Sigmoid colon (tissue), 7 donors: ENCODE measurements at regions of chr19 and their contacts with region 1.

Region 1: GRCh38 chr19:50383852-50384684 is at the start of gene POLD1:
- DNase-seq: peak; percentile 98
- H3K4me3 ChIP-seq: peak within 1 kb of the TSS; percentile 58 to 77 (median 73)
- H3K27ac ChIP-seq: peak within 1 kb of the TSS; percentile 84 to 92 (median 88)
- H3K4me1 ChIP-seq: peaks cover 0 to 21% (median 16%) of the 10 kb centered on the region in 4 donors
- H3K27me3 ChIP-seq: no peaks in the 10 kb centered on the region
- CTCF ChIP-seq: no peak
- EP300 ChIP-seq: no peak
- POLR2A ChIP-seq: no peak
- total RNA-seq, gene POLD1: 9.6 to 20.5 (median 10.0) TPM

Region 2: GRCh38 chr19:50300814-50301606 is 83.1 kb before region 1 on chr19:
- intact Hi-C with region 1: no loop called
- DNase-seq: no peak
- H3K4me3 ChIP-seq: no peak overlapping the region
- H3K27ac ChIP-seq: no peak overlapping the region
- H3K4me1 ChIP-seq: no peaks in the 10 kb centered on the region
- H3K27me3 ChIP-seq: peaks cover 0 to 6% (median 0%) of the 10 kb centered on the region in 3 donors
- CTCF ChIP-seq: no peak
- EP300 ChIP-seq: no peak
- POLR2A ChIP-seq: no peak

Region 3: DNA sequence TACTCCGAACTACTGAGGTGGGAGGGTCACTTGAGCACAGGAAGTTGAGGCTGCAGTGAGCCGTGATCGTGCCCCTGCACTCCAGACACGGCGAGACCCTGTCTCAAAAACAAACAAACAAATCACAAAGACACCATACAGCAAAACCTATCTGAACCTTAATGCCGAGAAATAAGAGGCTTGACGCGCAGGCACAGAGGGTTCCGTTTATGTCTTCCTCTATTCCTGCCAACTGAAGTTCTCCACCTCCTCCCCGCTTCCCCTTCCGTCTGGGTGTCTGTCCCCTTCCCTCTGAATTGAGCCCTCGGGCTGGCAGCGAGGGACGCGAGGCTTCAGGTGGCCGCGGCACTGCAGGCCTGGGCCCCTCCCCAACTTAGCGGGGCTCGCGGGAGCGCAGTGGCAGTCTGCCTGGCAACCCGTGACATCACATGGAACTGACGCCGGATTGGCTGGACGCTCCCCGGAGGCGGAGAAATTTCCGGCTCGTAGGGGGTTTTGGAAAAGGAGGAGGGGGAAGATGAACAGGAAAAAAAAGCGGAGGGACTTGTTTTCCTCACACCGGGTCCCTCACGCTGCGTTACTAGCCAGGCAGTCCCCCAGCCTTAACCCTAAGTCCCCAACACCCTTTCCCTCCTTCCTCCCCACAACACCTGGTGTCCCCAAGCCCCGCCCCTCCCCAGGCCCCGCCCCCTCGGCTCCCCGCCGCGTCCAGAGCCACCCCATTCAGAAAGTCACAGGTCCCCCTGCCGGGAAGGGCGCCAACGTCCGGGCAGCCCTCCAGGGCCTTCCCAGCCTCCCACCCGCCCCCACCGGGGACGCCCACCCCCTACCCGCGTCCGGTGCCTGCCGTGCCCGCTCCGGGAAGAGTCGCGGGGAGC is 47.5 kb after region 1 on chr19:
- intact Hi-C with region 1: loop called (anchors 5 kb)
- DNase-seq: peak; percentile 89
- H3K4me3 ChIP-seq: peak overlapping the region; percentile 31 to 63 (median 55)
- H3K27ac ChIP-seq: peak overlapping the region in 3 of 4 donors; percentile 34 to 66 (median 47)
- H3K4me1 ChIP-seq: peaks cover 0 to 26% (median 18%) of the 10 kb centered on the region in 4 donors
- H3K27me3 ChIP-seq: peaks cover 12 to 61% (median 61%) of the 10 kb centered on the region in 3 donors
- CTCF ChIP-seq: no peak
- EP300 ChIP-seq: no peak
- POLR2A ChIP-seq: no peak